SK-N-SH (cell line): ENCODE measurements at regions of chr5 and their contacts with region 1.

Region 1: GRCh38 chr5:51382763-51383490 is at the start of gene ISL1:
- DNase-seq: peak; percentile 88
- H3K4me3 ChIP-seq: peak within 1 kb of the TSS; percentile 83 to 86
- H3K27ac ChIP-seq: peak within 1 kb of the TSS; percentile 88 to 100
- H3K4me1 ChIP-seq: peaks cover 3 to 10% of the 10 kb centered on the region in 2 experiments; a peak in 3 of 4 replicates
- H3K27me3 ChIP-seq: no peaks in the 10 kb centered on the region
- CTCF ChIP-seq: peak; percentile 14; the same call in 1 of the 2 replicates
- EP300 ChIP-seq: no peak; a peak in 1 of 4 replicates
- RAD21 ChIP-seq: peak; percentile 14; the same call in 1 of the 2 replicates
- polyA plus RNA-seq, gene ISL1: 15.2 and 15.5 TPM in 2 replicates

Region 2: DNA sequence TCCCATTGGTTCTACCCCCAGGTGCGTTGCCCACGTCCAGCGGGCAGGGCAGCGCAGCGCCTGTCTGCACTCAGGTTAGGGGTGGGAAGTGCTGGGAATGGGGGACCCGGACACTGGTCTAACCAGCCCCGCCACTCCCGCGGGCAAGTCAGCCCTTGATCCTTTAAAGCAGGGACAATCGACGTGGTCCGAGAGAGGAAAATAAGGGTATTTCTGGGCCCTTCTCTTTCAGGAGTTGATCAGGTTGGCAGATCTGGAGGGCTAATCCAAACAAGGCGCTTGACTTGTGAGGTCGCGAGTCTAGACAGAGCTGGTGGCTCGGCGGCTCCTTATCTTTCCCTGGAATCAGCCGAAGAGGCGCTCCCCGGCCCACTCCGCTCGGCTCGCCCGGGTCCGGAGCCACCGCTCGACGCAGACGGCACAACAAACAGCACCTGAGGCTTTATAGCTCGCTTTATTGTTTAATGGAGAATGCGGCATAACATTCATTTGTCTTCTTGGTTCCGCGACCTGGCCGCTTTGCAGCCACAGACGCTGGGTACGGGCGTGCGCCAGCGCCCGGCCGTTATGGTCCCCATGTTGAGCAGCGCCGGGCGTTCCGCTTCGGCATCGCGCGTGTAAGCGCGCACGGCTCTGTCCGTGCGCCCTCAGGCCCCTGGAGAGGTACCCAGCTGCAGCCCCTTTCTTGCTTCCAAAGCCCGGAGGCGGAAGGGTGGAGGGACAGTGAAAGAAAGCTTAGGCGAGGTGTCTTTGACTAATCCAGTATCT is 16.1 kb after region 1 on chr5:
- CTCF ChIA-PET with region 1: interaction called, 30 read pairs
- POLR2A ChIA-PET with region 1: interaction called, 48 read pairs
- DNase-seq: peak; percentile 79
- H3K4me3 ChIP-seq: peak overlapping the region; percentile 38 to 50
- H3K27ac ChIP-seq: peak overlapping the region; percentile 85 to 100
- H3K4me1 ChIP-seq: peaks cover 5 to 56% of the 10 kb centered on the region in 2 experiments; a peak in 3 of 4 replicates
- H3K27me3 ChIP-seq: no peaks in the 10 kb centered on the region
- CTCF ChIP-seq: no peak
- EP300 ChIP-seq: no peak
- RAD21 ChIP-seq: 0 out of 2 replicates have a peak, but pooled peaks have one; percentile 13

Region 3: GRCh38 chr5:51468196-51468595 is 85.3 kb after region 1 on chr5:
- CTCF ChIA-PET with region 1: interaction called, 5 read pairs
- POLR2A ChIA-PET with region 1: interaction called, 22 read pairs
- DNase-seq: no peak
- H3K4me3 ChIP-seq: peak overlapping the region in 1 of 2 experiments; percentile 41; a peak in 1 of 4 replicates
- H3K27ac ChIP-seq: peak overlapping the region in 1 of 2 experiments; percentile 99; a peak in 2 of 4 replicates
- H3K4me1 ChIP-seq: peaks cover 0 to 48% of the 10 kb centered on the region in 2 experiments; a peak in 2 of 4 replicates
- H3K27me3 ChIP-seq: no peaks in the 10 kb centered on the region
- CTCF ChIP-seq: peak; percentile 49
- EP300 ChIP-seq: peak in 1 of 2 experiments; percentile 13; a peak in 1 of 4 replicates
- RAD21 ChIP-seq: peak; percentile 79

Region 4: DNA sequence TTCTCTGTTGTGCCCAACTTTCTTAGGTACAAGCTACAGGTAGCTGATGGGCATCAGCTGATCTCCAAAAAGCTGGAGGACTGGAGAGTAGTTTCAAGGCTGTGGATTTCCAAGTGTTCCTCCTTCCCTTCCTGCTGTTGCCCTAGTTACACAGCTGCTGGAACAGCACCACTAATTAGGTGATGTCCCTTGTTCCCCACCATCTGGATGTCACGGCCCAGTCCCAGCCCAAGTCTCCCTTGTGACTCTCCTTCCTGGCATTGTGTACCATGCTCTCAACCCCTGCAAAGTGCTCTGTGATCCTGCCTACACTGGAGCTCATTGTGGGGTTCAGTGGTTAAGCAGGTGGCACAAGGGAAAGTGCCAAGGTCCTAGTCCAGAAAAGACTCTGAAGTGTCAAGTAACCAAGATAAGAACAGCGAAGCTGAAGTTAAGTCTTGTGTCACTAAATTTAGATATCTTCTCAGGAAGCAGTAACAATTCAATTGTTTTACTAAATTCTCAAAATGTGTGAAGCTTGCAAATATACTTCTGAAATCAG is 604.8 kb after region 1 on chr5:
- CTCF ChIA-PET with region 1: interaction called, 5 read pairs
- POLR2A ChIA-PET with region 1: interaction called, 31 read pairs
- DNase-seq: no peak
- H3K4me3 ChIP-seq: no peak overlapping the region
- H3K27ac ChIP-seq: peak overlapping the region in 1 of 2 experiments; percentile 100; a peak in 2 of 4 replicates
- H3K4me1 ChIP-seq: peaks cover 0 to 50% of the 10 kb centered on the region in 2 experiments; a peak in 2 of 4 replicates
- H3K27me3 ChIP-seq: no peaks in the 10 kb centered on the region
- CTCF ChIP-seq: no peak
- EP300 ChIP-seq: no peak
- RAD21 ChIP-seq: no peak

Region 5: GRCh38 chr5:52007230-52007858 is 624.4 kb after region 1 on chr5:
- CTCF ChIA-PET with region 1: interaction called, 11 read pairs
- POLR2A ChIA-PET with region 1: interaction called, 3 read pairs
- DNase-seq: peak; percentile 44
- H3K4me3 ChIP-seq: peak overlapping the region in 1 of 2 experiments; percentile 21; a peak in 1 of 4 replicates
- H3K27ac ChIP-seq: peak overlapping the region in 1 of 2 experiments; percentile 94; a peak in 2 of 4 replicates
- H3K4me1 ChIP-seq: peaks cover 0 to 3% of the 10 kb centered on the region in 2 experiments; a peak in 1 of 4 replicates
- H3K27me3 ChIP-seq: no peaks in the 10 kb centered on the region
- CTCF ChIP-seq: peak; percentile 89
- EP300 ChIP-seq: 0 out of 4 replicates have a peak, but pooled peaks of 1 of the 2 experiments have one; percentile 23
- RAD21 ChIP-seq: peak; percentile 98